PC-9 (cell line): ENCODE measurements at regions of chr3 and their contacts with region 1.

Region 1: GRCh38 chr3:32510075-32510724 is 7.5 kb upstream of the CMTM6 start:
- DNase-seq: peak in 1 of 2 experiments; percentile 51
- H3K4me3 ChIP-seq: no peak overlapping the region
- H3K27ac ChIP-seq: no peak overlapping the region
- H3K4me1 ChIP-seq: no peaks in the 10 kb centered on the region
- H3K27me3 ChIP-seq: no peaks in the 10 kb centered on the region
- CTCF ChIP-seq: peak; percentile 73

Region 2: GRCh38 chr3:32593903-32594525 is 83.8 kb after region 1 on chr3:
- CTCF ChIA-PET with region 1: interaction called, 11 read pairs
- POLR2A ChIA-PET with region 1: no interaction called
- intact Hi-C with region 1: no loop called
- DNase-seq: no peak
- H3K4me3 ChIP-seq: no peak overlapping the region
- H3K27ac ChIP-seq: no peak overlapping the region
- H3K4me1 ChIP-seq: no peaks in the 10 kb centered on the region
- H3K27me3 ChIP-seq: no peaks in the 10 kb centered on the region
- CTCF ChIP-seq: no peak

Region 3: GRCh38 chr3:32934150-32934742 is 424.0 kb after region 1 on chr3:
- CTCF ChIA-PET with region 1: no interaction called
- POLR2A ChIA-PET with region 1: no interaction called
- intact Hi-C with region 1: loop called (anchors 2 kb)
- DNase-seq: peak in 1 of 2 experiments; percentile 9
- H3K4me3 ChIP-seq: no peak overlapping the region
- H3K27ac ChIP-seq: no peak overlapping the region
- H3K4me1 ChIP-seq: no peaks in the 10 kb centered on the region
- H3K27me3 ChIP-seq: no peaks in the 10 kb centered on the region
- CTCF ChIP-seq: peak; percentile 64